HEK293 (cell line): ENCODE measurements at regions of chr5 and their contacts with region 1.

Region 1: DNA sequence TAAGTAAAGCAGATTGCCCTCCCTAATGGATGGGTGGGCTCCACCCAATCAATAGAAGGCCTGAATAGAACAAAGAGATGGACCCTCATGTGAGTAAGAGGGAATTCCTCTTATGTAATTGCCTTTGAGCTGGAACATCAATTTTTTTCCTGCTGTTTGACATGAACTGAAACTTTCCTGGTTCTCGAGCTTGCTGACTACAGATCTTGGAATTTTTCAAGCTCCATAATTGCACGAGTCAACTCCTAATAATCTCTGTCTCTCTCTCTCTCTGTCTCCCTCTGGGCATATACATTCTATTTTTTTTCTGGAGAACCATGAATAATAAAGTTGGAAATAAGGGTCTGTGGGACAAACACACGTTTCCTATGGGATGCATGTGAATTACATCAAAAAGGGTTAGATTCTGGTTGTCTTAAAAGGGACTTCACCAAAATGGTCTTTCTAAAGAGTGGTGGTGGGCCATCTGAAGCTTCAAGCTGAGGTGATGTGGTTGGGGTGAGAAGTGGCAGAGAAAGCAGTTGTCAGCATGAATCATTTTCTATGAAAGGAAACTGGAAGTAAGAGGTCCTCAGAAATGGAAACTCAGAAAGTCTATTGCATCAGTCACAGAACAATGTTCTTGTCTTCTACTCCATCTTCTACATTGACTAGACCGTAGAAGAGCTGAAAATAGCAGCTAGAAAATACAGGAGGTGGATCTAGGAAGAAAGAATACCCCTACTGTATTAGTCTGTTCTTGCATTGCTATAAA is 47.0 kb upstream of the HOMER1 start:
- H3K4me3 ChIP-seq: no peak overlapping the region
- H3K27ac ChIP-seq: no peak overlapping the region
- H3K4me1 ChIP-seq: peaks cover 7% of the 10 kb centered on the region
- CTCF ChIP-seq: no peak

Region 2: GRCh38 chr5:79546782-79547428 is 14.0 kb before region 1 on chr5:
- CTCF ChIA-PET with region 1: no interaction called
- POLR2A ChIA-PET with region 1: no interaction called
- H3K4me3 ChIP-seq: no peak overlapping the region
- H3K27ac ChIP-seq: no peak overlapping the region
- H3K4me1 ChIP-seq: no peaks in the 10 kb centered on the region; the same call in 1 of the 2 replicates
- CTCF ChIP-seq: no peak

Region 3: GRCh38 chr5:79573983-79574890 is 13.3 kb after region 1 on chr5:
- CTCF ChIA-PET with region 1: interaction called, 11 read pairs
- POLR2A ChIA-PET with region 1: interaction called, 5 read pairs
- H3K4me3 ChIP-seq: no peak overlapping the region
- H3K27ac ChIP-seq: no peak overlapping the region
- H3K4me1 ChIP-seq: peaks cover 5% of the 10 kb centered on the region; the same call in 1 of the 2 replicates
- CTCF ChIP-seq: no peak

Region 4: DNA sequence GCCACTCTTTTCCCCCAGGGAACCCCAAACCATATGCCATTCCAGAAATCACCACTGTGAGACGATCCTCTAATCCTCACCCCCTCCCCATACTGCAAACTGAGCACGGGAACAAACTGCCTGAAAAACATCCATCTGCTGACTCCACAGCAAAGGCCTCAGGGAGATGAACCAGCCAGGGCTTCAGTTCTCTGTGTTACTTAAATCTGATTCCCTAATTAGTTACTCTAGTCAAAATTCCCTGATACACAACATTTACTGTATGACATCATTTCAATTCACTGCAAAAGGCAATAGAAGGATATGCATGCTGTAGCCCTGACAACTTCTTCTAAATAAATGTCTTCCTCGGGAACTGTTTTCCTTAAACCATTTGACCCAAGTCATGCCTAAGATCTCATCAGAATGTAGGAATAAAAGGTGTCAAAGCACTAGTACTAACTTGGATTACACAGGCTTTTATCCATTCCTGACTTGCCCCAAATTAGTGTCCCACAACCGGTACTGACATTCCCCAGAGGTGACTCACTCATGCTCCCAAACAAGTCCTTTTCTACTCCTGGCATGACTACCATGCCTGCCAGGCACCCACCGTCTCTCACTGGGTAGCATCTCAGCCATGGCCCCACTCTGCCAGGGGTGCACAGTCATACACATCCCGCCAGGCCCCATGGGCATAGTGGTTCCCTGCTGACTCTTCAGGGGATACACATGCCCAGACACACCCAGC is 395.2 kb after region 1 on chr5:
- CTCF ChIA-PET with region 1: no interaction called
- POLR2A ChIA-PET with region 1: no interaction called
- H3K4me3 ChIP-seq: no peak overlapping the region
- H3K27ac ChIP-seq: no peak overlapping the region
- H3K4me1 ChIP-seq: no peaks in the 10 kb centered on the region
- CTCF ChIP-seq: no peak